Caco-2 (cell line): ENCODE measurements at regions of chr14 and their contacts with region 1.

Region 1: DNA sequence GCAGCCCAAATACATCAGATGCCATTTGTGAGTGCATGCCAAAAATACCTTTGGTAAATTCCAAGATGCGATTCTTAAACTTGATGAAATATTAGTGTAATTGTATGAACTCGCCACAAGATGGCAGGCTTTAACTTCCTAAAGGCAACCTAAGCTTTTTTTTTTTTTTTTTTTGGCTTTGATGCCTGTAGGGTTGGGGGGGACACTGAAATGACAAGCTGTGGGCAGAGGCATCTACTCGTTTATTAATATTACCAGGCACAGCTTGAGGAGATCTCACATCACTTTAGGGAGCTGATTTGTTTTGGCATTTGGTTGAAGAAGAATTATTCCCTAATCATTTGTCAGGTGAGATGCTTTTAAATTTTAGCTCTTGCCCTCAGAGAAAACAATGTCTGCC is 126.7 kb upstream of the CCDC196 start:
- DNase-seq: peak in 1 of 2 experiments; percentile 28
- H3K4me3 ChIP-seq: no peak overlapping the region
- H3K4me3 Mint-ChIP-seq: no peak overlapping the region
- H3K27ac Mint-ChIP-seq: no peak overlapping the region
- H3K4me1 ChIP-seq: no peaks in the 10 kb centered on the region
- H3K4me1 Mint-ChIP-seq: peaks cover 7% of the 10 kb centered on the region
- H3K27me3 ChIP-seq: no peaks in the 10 kb centered on the region
- H3K27me3 Mint-ChIP-seq: peaks cover 8% of the 10 kb centered on the region
- CTCF ChIP-seq: peak; percentile 55 to 72

Region 2: GRCh38 chr14:66403183-66403582 is 43.7 kb after region 1 on chr14:
- CTCF ChIA-PET with region 1: interaction called, 59 read pairs
- POLR2A ChIA-PET with region 1: no interaction called
- intact Hi-C with region 1: loop called (anchors 1 kb)
- DNase-seq: peak in 1 of 2 experiments; percentile 40
- H3K4me3 ChIP-seq: no peak overlapping the region
- H3K4me3 Mint-ChIP-seq: no peak overlapping the region
- H3K27ac Mint-ChIP-seq: no peak overlapping the region
- H3K4me1 ChIP-seq: no peaks in the 10 kb centered on the region
- H3K4me1 Mint-ChIP-seq: no peaks in the 10 kb centered on the region
- H3K27me3 ChIP-seq: no peaks in the 10 kb centered on the region
- H3K27me3 Mint-ChIP-seq: no peaks in the 10 kb centered on the region
- CTCF ChIP-seq: peak in 1 of 2 experiments; percentile 60

Region 3: DNA sequence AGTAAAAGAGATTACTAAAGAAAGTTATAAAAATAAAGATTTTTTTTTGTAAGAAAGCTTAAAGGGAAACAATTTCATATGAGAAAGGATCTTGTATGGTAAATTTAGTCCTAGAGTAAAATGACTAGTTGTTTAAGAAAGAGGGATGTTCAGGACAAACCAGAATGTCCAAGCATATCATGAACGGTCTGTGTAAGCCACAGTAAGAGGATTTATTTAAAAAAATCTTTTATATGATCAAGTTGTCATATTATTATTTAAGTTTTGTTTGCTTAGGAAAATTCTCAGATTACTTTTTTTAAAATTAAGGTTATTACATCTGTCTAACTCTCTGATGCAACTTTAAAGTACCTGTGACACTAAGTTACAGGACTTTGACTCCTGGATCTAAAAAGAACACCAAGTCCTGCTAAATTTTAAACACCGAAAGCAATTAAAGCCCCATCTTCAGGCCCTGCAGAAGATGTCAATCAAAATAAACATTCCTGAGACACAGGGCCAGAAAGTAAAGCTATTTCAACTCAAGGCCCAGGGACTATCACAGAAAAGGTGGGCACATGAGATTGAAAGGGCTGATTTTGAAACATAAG is 109.4 kb after region 1 on chr14:
- CTCF ChIA-PET with region 1: no interaction called
- POLR2A ChIA-PET with region 1: no interaction called
- intact Hi-C with region 1: no loop called
- DNase-seq: no peak
- H3K4me3 ChIP-seq: no peak overlapping the region
- H3K4me3 Mint-ChIP-seq: no peak overlapping the region
- H3K27ac Mint-ChIP-seq: no peak overlapping the region
- H3K4me1 ChIP-seq: no peaks in the 10 kb centered on the region
- H3K4me1 Mint-ChIP-seq: no peaks in the 10 kb centered on the region
- H3K27me3 ChIP-seq: no peaks in the 10 kb centered on the region
- H3K27me3 Mint-ChIP-seq: no peaks in the 10 kb centered on the region
- CTCF ChIP-seq: no peak

Region 4: DNA sequence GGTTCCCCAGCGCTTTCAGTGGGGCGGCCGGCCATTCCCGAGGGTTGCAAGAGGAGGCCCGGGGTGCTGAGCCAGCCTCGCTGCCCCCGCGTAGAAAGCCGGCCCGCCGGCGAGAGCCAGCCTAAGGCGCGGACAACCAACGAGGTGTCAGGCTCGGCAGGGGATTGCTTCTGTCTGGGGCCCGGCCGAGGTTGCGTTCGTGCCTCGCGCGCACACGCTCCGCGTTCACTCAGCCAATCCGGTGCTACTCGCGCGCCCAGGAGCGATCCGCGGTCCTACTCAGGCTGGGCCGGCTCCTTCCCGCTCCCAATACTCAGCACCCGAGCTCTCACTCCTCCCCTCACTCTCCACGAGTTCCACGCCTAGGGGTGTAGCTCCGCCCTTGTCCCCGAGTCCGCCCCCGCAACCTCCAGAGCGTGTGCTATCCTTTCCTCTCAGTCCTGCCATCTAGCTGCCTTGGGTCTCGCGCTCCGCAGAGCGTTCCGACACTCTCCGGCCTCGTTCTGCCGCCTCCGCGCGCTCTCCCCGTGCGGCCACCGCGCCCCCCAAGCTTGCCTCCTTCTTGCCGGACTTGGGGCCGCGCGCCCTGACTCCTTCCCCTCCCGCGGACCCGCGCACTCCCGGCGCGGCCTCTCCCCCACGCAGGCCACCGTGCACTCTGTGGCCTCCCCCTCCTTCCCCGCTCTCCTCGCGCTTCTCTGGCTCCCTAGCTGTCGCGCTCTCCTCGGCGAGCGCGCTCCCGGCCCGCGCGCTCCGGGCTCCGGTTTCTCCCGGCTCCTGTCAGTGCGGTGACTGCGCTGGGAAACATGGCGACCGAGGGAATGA is 148.4 kb after region 1 on chr14 and contains the start of gene GPHN:
- CTCF ChIA-PET with region 1: interaction called, 5 read pairs
- POLR2A ChIA-PET with region 1: no interaction called
- intact Hi-C with region 1: loop called (anchors 5 kb)
- DNase-seq: peak; percentile 94 to 95
- H3K4me3 ChIP-seq: peak within 1 kb of the TSS; percentile 64
- H3K4me3 Mint-ChIP-seq: peak within 1 kb of the TSS; percentile 92
- H3K27ac Mint-ChIP-seq: peak within 1 kb of the TSS; percentile 64
- H3K4me1 ChIP-seq: no peaks in the 10 kb centered on the region
- H3K4me1 Mint-ChIP-seq: peaks cover 9% of the 10 kb centered on the region
- H3K27me3 ChIP-seq: no peaks in the 10 kb centered on the region
- H3K27me3 Mint-ChIP-seq: peaks cover 12% of the 10 kb centered on the region
- CTCF ChIP-seq: peak in 1 of 2 experiments; percentile 34
- total RNA-seq, gene GPHN: 11.3 and 12.4 TPM in 2 replicates

Region 5: DNA sequence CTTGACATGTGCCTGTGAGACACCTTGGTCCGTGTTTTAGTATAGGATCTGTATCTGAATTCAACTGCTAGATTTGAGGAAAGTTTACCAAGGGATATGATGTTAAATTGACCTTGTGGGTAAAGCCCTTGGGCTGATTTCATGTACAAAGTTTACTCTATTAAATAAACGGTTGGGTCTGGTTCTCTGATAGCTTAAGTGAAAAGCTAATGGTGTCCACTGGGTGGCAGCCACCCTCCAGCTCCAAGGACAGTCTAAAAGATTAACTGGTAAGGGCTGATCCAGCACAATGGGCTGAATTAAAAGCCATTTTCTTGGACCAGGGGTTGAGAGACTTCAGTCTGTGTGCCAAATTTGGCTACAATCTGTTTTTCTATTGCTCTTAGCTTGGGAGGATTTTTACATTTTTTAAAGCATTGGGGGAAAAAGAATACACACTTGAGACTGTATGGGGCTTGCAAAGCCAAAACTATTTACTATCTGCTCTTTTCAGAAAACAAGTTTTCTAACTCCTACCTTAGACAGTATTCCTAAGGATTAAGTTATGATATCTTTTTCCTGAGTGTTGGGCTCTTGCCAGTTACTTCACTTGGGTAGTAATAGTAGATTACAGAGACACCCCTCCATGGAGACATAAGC is 264.9 kb after region 1 on chr14:
- CTCF ChIA-PET with region 1: interaction called, 24 read pairs
- POLR2A ChIA-PET with region 1: no interaction called
- intact Hi-C with region 1: loop called (anchors 5 kb)
- DNase-seq: peak; percentile 55 to 61
- H3K4me3 ChIP-seq: no peak overlapping the region
- H3K4me3 Mint-ChIP-seq: no peak overlapping the region
- H3K27ac Mint-ChIP-seq: no peak overlapping the region
- H3K4me1 ChIP-seq: no peaks in the 10 kb centered on the region
- H3K4me1 Mint-ChIP-seq: peaks cover 6% of the 10 kb centered on the region
- H3K27me3 ChIP-seq: no peaks in the 10 kb centered on the region
- H3K27me3 Mint-ChIP-seq: no peaks in the 10 kb centered on the region
- CTCF ChIP-seq: peak in 1 of 2 experiments; percentile 68

Region 6: GRCh38 chr14:66746316-66747006 is 387.0 kb after region 1 on chr14:
- CTCF ChIA-PET with region 1: interaction called, 11 read pairs
- POLR2A ChIA-PET with region 1: no interaction called
- intact Hi-C with region 1: loop called (anchors 10 kb)
- DNase-seq: peak in 1 of 2 experiments; percentile 22
- H3K4me3 ChIP-seq: no peak overlapping the region
- H3K4me3 Mint-ChIP-seq: no peak overlapping the region
- H3K27ac Mint-ChIP-seq: no peak overlapping the region
- H3K4me1 ChIP-seq: no peaks in the 10 kb centered on the region
- H3K4me1 Mint-ChIP-seq: no peaks in the 10 kb centered on the region
- H3K27me3 ChIP-seq: no peaks in the 10 kb centered on the region
- H3K27me3 Mint-ChIP-seq: no peaks in the 10 kb centered on the region
- CTCF ChIP-seq: peak; percentile 50 to 61